Panc1 (cell line): ENCODE measurements at regions of chr10 and their contacts with region 1.

Region 1: GRCh38 chr10:97612386-97612785 is 20.9 kb downstream of the MORN4 start:
- DNase-seq: no peak
- ATAC-seq: peak; percentile 98
- H3K4me3 ChIP-seq: no peak overlapping the region
- H3K27ac ChIP-seq: no peak overlapping the region
- H3K4me1 ChIP-seq: peaks cover 10% of the 10 kb centered on the region; the same call in 1 of the 2 replicates
- H3K27me3 ChIP-seq: no peaks in the 10 kb centered on the region
- CTCF ChIP-seq: no peak; the same call in 1 of the 2 replicates

Region 2: GRCh38 chr10:96556003-96556402 is 1056.4 kb before region 1 on chr10:
- CTCF ChIA-PET with region 1: no interaction called
- POLR2A ChIA-PET with region 1: no interaction called
- in situ Hi-C with region 1: no loop called
- intact Hi-C with region 1: no loop called
- DNase-seq: no peak
- ATAC-seq: no peak
- H3K4me3 ChIP-seq: no peak overlapping the region
- H3K27ac ChIP-seq: no peak overlapping the region
- H3K4me1 ChIP-seq: no peaks in the 10 kb centered on the region
- H3K27me3 ChIP-seq: no peaks in the 10 kb centered on the region
- CTCF ChIP-seq: peak; percentile 57; the same call in 1 of the 2 replicates

Region 3: GRCh38 chr10:97270523-97271154 is 341.7 kb before region 1 on chr10:
- CTCF ChIA-PET with region 1: no interaction called
- POLR2A ChIA-PET with region 1: no interaction called
- in situ Hi-C with region 1: no loop called
- intact Hi-C with region 1: no loop called
- DNase-seq: no peak
- ATAC-seq: no peak
- H3K4me3 ChIP-seq: no peak overlapping the region
- H3K27ac ChIP-seq: 0 out of 2 replicates have a peak overlapping the region, but pooled peaks have one; percentile 29
- H3K4me1 ChIP-seq: peaks cover 7% of the 10 kb centered on the region
- H3K27me3 ChIP-seq: no peaks in the 10 kb centered on the region
- CTCF ChIP-seq: no peak

Region 4: GRCh38 chr10:97463363-97464132 is 148.8 kb before region 1 on chr10:
- CTCF ChIA-PET with region 1: interaction called, 5 read pairs
- POLR2A ChIA-PET with region 1: no interaction called
- in situ Hi-C with region 1: no loop called
- intact Hi-C with region 1: loop called (anchors 2 kb)
- DNase-seq: peak; percentile 51
- ATAC-seq: peak; percentile 77
- H3K4me3 ChIP-seq: no peak overlapping the region
- H3K27ac ChIP-seq: no peak overlapping the region
- H3K4me1 ChIP-seq: no peaks in the 10 kb centered on the region
- H3K27me3 ChIP-seq: no peaks in the 10 kb centered on the region
- CTCF ChIP-seq: peak; percentile 95

Region 5: DNA sequence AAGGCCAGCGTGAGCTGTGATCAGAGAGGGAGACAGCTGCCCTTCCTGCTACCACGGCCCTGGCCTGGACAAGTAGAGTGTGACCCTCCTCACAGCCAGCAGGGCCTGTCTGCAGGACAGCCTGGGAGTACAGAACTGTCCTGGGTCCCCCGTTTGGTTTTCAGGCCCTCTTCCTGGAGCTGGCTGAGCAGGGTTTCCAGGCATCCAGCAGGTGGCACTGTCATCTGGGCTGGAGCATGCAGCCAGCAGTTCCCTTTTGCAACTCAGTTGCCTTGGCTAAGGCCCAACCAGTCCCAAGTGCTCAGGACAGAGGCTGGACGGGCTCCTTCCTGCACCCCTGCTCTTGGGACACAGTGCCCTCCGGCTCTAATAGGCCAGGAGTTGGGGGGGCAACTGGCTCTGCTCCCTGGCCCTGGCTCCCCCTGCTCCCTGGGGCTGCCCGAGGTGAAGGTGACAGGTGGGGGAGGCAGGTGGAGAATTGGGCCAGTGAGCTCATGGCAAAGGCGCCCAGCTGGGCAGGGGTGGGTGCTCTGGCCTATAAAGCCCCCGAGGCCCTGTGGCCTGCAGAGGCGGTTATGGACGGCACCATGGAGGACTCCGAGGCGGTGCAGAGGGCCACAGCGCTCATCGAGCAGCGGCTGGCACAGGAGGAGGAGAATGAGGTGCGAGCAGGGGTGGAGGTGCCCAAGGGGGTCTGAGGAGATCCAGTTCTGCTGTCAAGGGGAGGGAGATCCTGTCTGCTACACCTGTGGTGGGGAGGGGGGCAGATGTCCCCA is 40.0 kb before region 1 on chr10 and contains the start of gene ANKRD2:
- CTCF ChIA-PET with region 1: interaction called, 23 read pairs
- POLR2A ChIA-PET with region 1: no interaction called
- in situ Hi-C with region 1: no loop called
- intact Hi-C with region 1: loop called (anchors 2 kb)
- DNase-seq: peak; percentile 53
- ATAC-seq: peak; percentile 73
- H3K4me3 ChIP-seq: no peak within 1 kb of the TSS
- H3K27ac ChIP-seq: peak within 1 kb of the TSS; percentile 87
- H3K4me1 ChIP-seq: peaks cover 55% of the 10 kb centered on the region
- H3K27me3 ChIP-seq: no peaks in the 10 kb centered on the region
- CTCF ChIP-seq: peak; percentile 98
- total RNA-seq, gene ANKRD2: 0.98 TPM

Region 6: DNA sequence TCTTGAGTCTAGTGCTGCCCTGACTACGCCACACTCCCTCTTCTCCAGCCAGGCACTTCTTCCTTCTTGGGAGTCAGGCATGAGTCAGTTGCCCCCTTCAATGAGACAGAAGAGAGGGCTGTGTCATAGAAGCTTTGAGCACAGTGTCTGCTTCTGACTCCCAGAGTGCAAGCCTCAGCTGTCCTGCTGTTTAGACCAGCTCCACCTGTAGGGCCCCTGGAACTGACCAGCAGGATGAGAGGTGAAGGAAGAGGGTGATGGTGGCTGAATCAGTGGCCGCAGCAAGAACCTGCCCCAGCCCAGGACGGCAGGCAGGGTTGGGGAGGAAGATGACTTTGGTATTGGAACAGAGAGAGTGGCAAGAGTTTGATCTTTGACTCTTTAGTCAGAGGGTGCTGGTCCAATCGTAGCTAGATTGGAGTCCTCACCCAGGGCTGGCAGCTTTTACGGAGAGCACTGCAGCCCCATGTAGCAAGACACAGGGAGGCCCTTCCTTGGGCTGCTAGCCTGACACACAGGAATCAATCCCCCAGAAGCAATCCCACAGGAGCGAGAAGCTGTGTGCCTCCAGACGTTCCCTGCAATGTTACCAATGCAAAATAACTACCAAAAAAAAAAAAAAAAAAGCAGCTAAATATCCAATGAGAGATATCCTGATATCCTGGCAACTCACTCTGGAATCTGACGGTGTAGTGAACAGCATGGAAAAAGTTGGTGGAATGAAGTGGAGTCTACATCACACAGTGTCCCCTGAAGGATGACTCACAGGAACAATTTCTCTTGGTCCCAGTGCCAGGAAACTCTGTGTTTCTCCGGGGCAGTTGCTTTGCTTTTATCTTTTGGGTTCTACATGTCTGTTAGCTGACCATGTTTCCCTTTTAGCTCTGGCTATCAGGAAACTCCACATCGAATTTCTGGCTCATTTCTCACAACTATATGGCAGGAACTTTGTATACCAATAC is 16.0 kb before region 1 on chr10:
- CTCF ChIA-PET with region 1: interaction called, 4 read pairs
- POLR2A ChIA-PET with region 1: interaction called, 14 read pairs
- in situ Hi-C with region 1: no loop called
- intact Hi-C with region 1: no loop called
- DNase-seq: no peak
- ATAC-seq: peak; percentile 85
- H3K4me3 ChIP-seq: no peak overlapping the region
- H3K27ac ChIP-seq: peak overlapping the region; percentile 66
- H3K4me1 ChIP-seq: peaks cover 14% of the 10 kb centered on the region; the same call in 1 of the 2 replicates
- H3K27me3 ChIP-seq: no peaks in the 10 kb centered on the region
- CTCF ChIP-seq: no peak

Region 7: GRCh38 chr10:97943294-97943693 is 330.9 kb after region 1 on chr10:
- CTCF ChIA-PET with region 1: no interaction called
- POLR2A ChIA-PET with region 1: no interaction called
- in situ Hi-C with region 1: no loop called
- intact Hi-C with region 1: no loop called
- DNase-seq: no peak
- ATAC-seq: no peak
- H3K4me3 ChIP-seq: no peak overlapping the region
- H3K27ac ChIP-seq: no peak overlapping the region
- H3K4me1 ChIP-seq: no peaks in the 10 kb centered on the region
- H3K27me3 ChIP-seq: peaks cover 8% of the 10 kb centered on the region
- CTCF ChIP-seq: no peak